ENCODE measurements at regions of chr10 and their contacts with region 1.

Region 1: GRCh38 chr10:71727738-71728737 is 8.5 kb upstream of the C10orf105 start:
- DNase-seq: peak; percentile 78 to 86 (median 82)
- H3K4me3 ChIP-seq: no peak overlapping the region
- H3K27ac ChIP-seq: peak overlapping the region; percentile 32 to 85
- H3K4me1 ChIP-seq: peaks cover 19% of the 10 kb centered on the region
- H3K27me3 ChIP-seq: no peaks in the 10 kb centered on the region
- CTCF ChIP-seq: no peak
- EP300 ChIP-seq: no peak
- POLR2A ChIP-seq: no peak

Region 2: DNA sequence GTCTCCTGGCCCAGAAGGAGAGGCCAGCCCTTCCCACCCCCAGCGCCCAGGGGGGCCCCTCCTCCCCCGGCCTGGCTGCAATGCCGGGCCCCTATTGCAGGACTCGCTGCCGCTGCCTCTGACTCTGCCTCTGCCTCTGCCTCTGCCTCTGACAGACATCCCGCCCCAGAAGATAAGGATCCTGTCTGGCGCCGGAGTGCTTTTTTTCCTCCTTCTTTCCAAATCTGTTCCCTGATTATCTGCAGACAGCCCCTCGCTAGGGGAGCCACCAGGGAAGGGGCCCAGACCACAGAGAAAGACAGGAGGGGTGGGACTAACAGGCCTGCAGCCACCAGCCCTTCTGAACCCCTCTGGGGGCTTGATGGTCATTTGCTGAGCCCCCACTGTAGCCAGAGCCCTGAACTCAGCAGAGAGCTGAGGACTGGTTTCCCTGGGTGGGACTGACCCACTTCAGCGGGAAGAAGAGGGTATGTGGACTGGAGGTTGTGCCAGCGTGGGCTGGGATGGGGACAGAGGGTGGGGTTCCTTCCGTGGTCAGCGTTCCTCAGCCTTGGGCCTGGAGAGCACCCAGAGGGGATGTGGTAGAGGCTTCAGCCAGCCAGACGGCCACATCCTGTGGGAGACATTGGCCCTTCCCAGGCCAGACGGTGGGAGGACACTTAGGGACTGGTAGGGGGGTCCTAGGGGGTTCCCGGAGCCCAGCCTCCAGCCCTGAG is 492.9 kb before region 1 on chr10:
- intact Hi-C with region 1: loop called in 1 of 4 experiments (anchors 5 kb)
- DNase-seq: peak in 1 of 5 donors; percentile 39
- H3K4me3 ChIP-seq: no peak overlapping the region
- H3K27ac ChIP-seq: peak overlapping the region in 1 of 2 donors; percentile 37
- H3K4me1 ChIP-seq: peaks cover 5% of the 10 kb centered on the region
- H3K27me3 ChIP-seq: no peaks in the 10 kb centered on the region
- CTCF ChIP-seq: no peak
- EP300 ChIP-seq: no peak
- POLR2A ChIP-seq: no peak